ENCODE measurements at regions of chr2 and their contacts with region 1.

Region 1: DNA sequence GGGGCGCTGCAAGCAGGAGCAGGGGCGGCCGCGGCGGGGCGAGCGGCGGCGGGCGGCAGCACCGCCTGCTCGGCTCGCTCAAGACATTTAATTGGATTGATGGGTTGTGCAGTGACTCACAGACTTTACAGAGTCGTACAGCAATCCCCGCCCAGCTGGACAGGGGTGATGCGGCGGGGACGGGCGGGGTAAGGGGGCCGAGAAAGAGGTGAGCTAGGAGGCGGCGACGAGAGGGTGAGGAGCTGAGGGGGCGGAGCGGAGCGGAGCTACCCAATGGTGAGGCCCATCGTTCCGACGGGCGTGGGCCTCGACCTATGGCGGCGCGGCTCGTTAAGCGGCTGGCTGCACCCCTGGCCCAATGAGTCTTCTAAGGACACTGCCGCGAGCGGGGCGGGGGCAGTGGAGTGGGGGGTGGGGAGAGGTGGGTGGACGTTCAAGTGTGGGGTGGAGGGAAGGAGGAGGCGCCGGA is 97.1 kb upstream of the SERTAD2 start:
- DNase-seq: peak; percentile 99 to 100
- H3K4me3 ChIP-seq: peak overlapping the region; percentile 69 to 89
- H3K27ac ChIP-seq: peak overlapping the region; percentile 95 to 97
- H3K4me1 ChIP-seq: peaks cover 0 to 35% (median 20%) of the 10 kb centered on the region in 4 donors
- H3K27me3 ChIP-seq: no peaks in the 10 kb centered on the region
- CTCF ChIP-seq: no peak

Region 2: DNA sequence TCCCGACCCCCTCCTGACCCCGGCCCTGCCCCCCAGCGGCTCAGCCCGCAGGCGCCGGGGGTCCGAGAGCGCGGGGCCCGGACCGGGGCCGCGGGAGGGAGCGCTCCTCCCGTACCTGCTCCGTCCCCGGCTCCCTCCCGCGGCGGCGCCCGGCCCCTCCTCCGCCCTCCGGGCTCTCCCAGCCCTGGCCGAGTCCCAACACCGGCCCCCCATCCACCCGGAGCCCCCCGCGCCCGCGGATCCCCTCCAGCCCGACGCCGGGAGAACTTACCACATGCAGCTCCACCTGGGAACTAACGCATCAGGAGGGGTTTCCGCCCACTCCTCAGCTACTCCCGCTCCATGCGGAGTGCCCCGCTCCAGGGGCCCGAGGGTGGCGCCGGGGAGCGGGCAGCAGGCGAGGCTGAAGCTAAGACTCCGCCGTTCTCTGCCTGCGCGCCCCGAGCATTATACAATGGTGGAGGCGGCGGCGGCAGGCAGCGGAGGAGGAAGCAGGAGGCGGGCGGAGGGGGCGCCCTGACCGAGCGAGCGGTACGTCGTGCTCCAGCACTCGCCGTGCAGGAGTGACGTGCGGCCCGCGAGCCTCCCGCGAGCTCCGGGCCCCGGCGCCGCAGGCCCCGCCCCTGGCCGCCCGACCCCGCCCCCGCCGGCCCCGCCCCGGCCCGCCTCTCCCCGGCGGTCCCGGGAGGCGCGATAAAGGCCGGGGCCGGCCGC is 97.3 kb before region 1 on chr2 and contains the start of gene SERTAD2:
- intact Hi-C with region 1: loop called (anchors 5 kb)
- DNase-seq: peak; percentile 88 to 94
- H3K4me3 ChIP-seq: peak within 1 kb of the TSS; percentile 79 to 98
- H3K27ac ChIP-seq: peak within 1 kb of the TSS; percentile 96 to 100
- H3K4me1 ChIP-seq: peaks cover 0 to 41% (median 20%) of the 10 kb centered on the region in 4 donors
- H3K27me3 ChIP-seq: no peaks in the 10 kb centered on the region
- CTCF ChIP-seq: no peak

Region 3: GRCh38 chr2:64685438-64685837 is 65.4 kb before region 1 on chr2:
- intact Hi-C with region 1: no loop called
- DNase-seq: no peak
- H3K4me3 ChIP-seq: no peak overlapping the region
- H3K27ac ChIP-seq: no peak overlapping the region
- H3K4me1 ChIP-seq: no peaks in the 10 kb centered on the region
- H3K27me3 ChIP-seq: no peaks in the 10 kb centered on the region
- CTCF ChIP-seq: no peak

Region 4: GRCh38 chr2:64859312-64860212 is 108.7 kb after region 1 on chr2:
- intact Hi-C with region 1: loop called (anchors 5 kb)
- DNase-seq: peak; percentile 91 to 97
- H3K4me3 ChIP-seq: peak overlapping the region; percentile 54 to 65
- H3K27ac ChIP-seq: peak overlapping the region; percentile 88 to 90
- H3K4me1 ChIP-seq: peaks cover 11 to 37% (median 33%) of the 10 kb centered on the region in 4 donors
- H3K27me3 ChIP-seq: no peaks in the 10 kb centered on the region
- CTCF ChIP-seq: peak in 1 of 2 experiments; percentile 29